ENCODE measurements at regions of chr16 and their contacts with region 1.

Region 1: DNA sequence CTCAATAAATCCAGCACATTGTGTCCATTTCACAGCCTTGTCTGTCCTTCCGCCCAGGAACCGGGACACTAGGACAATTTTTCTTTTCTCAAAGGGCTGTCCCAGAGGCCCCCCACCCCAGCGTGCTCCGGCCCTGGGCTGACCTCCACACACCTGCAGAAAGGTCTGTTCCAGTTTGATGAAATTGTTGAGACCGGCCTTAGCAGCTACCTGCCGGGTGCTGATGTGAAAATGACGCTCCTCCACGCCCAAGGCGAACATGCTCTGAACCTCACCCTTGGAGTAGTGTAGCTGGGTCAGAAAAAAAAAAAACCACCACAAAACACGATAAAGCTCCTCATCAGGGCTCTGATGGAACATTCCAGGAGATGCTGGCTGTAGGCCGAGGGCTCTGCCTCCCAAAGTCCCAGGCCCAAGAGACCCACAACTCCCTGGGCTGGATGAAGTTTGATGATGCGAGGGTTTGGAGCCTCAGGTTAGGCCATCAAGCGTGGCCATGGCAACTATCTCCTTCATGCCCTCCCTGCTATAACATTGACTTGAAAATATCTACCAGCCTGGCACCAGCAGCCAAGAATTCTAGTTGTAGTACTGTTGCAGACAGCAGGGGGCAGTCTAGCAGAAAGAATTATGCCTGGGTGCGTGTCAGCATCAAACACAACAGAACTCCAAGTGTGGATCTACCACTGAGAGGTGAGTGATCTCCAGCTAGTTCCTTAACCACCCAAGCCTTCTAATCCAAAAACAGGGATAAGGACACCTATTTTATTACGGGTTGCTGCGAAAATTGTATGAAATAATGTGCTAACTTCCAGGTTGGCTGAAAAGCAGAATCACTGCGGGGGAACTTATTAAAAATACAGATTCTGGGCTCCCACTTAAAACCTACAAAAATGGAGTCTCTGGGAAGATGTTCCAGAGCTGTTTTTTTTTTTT is 62.1 kb downstream of the RMI2 start:
- DNase-seq: peak; percentile 45
- ATAC-seq: peak; percentile 74
- H3K4me3 ChIP-seq: no peak overlapping the region
- H3K27ac ChIP-seq: no peak overlapping the region
- H3K4me1 ChIP-seq: no peaks in the 10 kb centered on the region
- H3K27me3 ChIP-seq: no peaks in the 10 kb centered on the region; a peak in 2 of 4 replicates
- CTCF ChIP-seq: peak; percentile 75 to 86 (median 83)
- EP300 ChIP-seq: no peak
- POLR2A ChIP-seq: no peak
- RAD21 ChIP-seq: peak; percentile 88

Region 2: DNA sequence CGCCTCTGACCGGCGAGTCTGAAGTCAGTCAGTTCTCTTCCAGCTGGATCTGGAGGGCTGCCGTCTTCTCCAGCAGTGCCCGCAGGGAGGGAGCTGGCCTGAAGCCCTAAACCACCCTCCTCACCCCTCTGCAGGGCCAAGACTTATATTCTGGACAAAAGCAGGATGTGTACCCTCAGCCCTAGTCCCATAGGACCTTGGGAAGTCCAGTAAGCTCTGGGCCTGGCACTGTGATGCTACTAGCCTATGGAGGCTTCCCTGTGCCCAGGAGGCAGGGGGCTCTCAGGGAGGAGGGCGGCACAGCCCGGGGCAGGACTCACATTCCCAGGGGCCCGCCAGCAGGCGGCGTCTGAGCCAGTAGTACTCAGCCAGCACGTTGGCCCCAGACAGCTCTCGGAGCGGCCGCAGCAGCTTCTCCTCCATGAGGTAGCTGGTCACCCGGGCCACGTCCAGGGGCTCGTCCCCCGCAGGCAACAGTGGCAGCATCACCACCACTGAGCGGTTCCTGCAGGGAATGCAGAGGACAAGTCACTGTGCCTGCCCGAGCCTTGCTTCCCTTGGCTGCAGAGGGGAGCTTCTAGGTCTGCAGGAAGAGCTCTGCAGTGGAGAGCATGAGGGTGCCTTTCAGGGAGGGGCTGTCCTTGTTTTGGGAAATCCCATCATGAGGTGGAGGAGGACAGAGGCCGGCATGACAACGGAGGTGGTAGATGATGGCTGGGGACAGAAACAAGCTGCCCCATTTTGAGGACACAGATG is 20.3 kb before region 1 on chr16:
- CTCF ChIA-PET with region 1: interaction called, 60 read pairs
- POLR2A ChIA-PET with region 1: no interaction called
- RAD21 ChIA-PET with region 1: interaction called, 5 read pairs
- SMC1A ChIA-PET with region 1: interaction called, 5 read pairs
- in situ Hi-C with region 1: no loop called
- intact Hi-C with region 1: no loop called
- DNase-seq: no peak
- ATAC-seq: peak; percentile 90
- H3K4me3 ChIP-seq: no peak overlapping the region
- H3K27ac ChIP-seq: no peak overlapping the region
- H3K4me1 ChIP-seq: peaks cover 11% of the 10 kb centered on the region
- H3K27me3 ChIP-seq: no peaks in the 10 kb centered on the region
- CTCF ChIP-seq: peak; percentile 47 to 77 (median 65)
- EP300 ChIP-seq: no peak
- POLR2A ChIP-seq: no peak
- RAD21 ChIP-seq: no peak

Region 3: GRCh38 chr16:11506741-11507305 is 99.5 kb after region 1 on chr16:
- CTCF ChIA-PET with region 1: interaction called, 8 read pairs
- POLR2A ChIA-PET with region 1: no interaction called
- RAD21 ChIA-PET with region 1: interaction called, 4 read pairs
- SMC1A ChIA-PET with region 1: interaction called, 8 read pairs
- in situ Hi-C with region 1: no loop called
- intact Hi-C with region 1: loop called (anchors 5 kb)
- DNase-seq: no peak
- ATAC-seq: peak; percentile 74
- H3K4me3 ChIP-seq: no peak overlapping the region
- H3K27ac ChIP-seq: no peak overlapping the region
- H3K4me1 ChIP-seq: peaks cover 6% of the 10 kb centered on the region; the same call in 1 of the 2 replicates
- H3K27me3 ChIP-seq: no peaks in the 10 kb centered on the region; a peak in 1 of 4 replicates
- CTCF ChIP-seq: peak; percentile 18 to 22 (median 20); a peak in 4 of 6 replicates
- EP300 ChIP-seq: no peak
- POLR2A ChIP-seq: no peak
- RAD21 ChIP-seq: no peak

Region 4: DNA sequence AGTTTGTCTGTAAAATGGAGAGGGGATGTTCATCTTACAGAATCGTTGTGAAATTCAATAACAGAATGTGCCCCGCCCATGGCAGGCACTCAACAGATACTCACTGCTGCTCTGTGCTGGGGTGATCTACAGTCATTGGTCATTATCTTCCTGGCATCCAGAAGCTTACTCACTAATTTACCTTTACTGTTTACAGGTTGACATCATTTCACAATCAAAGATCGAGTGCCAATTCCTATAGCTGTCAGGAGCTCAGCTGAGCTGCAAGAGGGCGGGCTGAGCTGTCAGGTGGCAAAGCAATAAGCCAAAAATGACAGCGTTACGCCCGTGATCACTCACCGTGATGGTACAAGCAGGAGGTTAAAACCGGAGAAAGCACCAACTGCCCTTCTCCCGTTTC is 128.2 kb after region 1 on chr16:
- CTCF ChIA-PET with region 1: interaction called, 80 read pairs
- POLR2A ChIA-PET with region 1: no interaction called
- RAD21 ChIA-PET with region 1: interaction called, 17 read pairs
- SMC1A ChIA-PET with region 1: interaction called, 52 read pairs
- in situ Hi-C with region 1: no loop called
- intact Hi-C with region 1: loop called (anchors 2 kb)
- DNase-seq: no peak
- ATAC-seq: no peak
- H3K4me3 ChIP-seq: no peak overlapping the region
- H3K27ac ChIP-seq: no peak overlapping the region
- H3K4me1 ChIP-seq: no peaks in the 10 kb centered on the region
- H3K27me3 ChIP-seq: no peaks in the 10 kb centered on the region; a peak in 1 of 4 replicates
- CTCF ChIP-seq: no peak
- EP300 ChIP-seq: no peak
- POLR2A ChIP-seq: no peak
- RAD21 ChIP-seq: no peak

Region 5: GRCh38 chr16:11632464-11632939 is 225.2 kb after region 1 on chr16:
- CTCF ChIA-PET with region 1: interaction called, 24 read pairs
- POLR2A ChIA-PET with region 1: no interaction called
- RAD21 ChIA-PET with region 1: interaction called, 4 read pairs
- SMC1A ChIA-PET with region 1: interaction called, 6 read pairs
- in situ Hi-C with region 1: no loop called
- intact Hi-C with region 1: no loop called
- DNase-seq: no peak
- ATAC-seq: no peak
- H3K4me3 ChIP-seq: no peak overlapping the region
- H3K27ac ChIP-seq: no peak overlapping the region
- H3K4me1 ChIP-seq: peaks cover 8% of the 10 kb centered on the region
- H3K27me3 ChIP-seq: no peaks in the 10 kb centered on the region; a peak in 1 of 4 replicates
- CTCF ChIP-seq: no peak
- EP300 ChIP-seq: no peak
- POLR2A ChIP-seq: no peak
- RAD21 ChIP-seq: no peak

Region 6: GRCh38 chr16:11715246-11715947 is 308.1 kb after region 1 on chr16:
- CTCF ChIA-PET with region 1: interaction called, 14 read pairs
- POLR2A ChIA-PET with region 1: no interaction called
- RAD21 ChIA-PET with region 1: interaction called, 4 read pairs
- SMC1A ChIA-PET with region 1: interaction called, 8 read pairs
- in situ Hi-C with region 1: no loop called
- intact Hi-C with region 1: loop called (anchors 5 kb)
- DNase-seq: no peak
- ATAC-seq: peak; percentile 80
- H3K4me3 ChIP-seq: no peak overlapping the region
- H3K27ac ChIP-seq: peak overlapping the region; percentile 48; the same call in 1 of the 2 replicates
- H3K4me1 ChIP-seq: peaks cover 16% of the 10 kb centered on the region
- H3K27me3 ChIP-seq: no peaks in the 10 kb centered on the region
- CTCF ChIP-seq: 0 out of 6 replicates have a peak, but pooled peaks of 1 of the 3 experiments have one; percentile 3
- EP300 ChIP-seq: no peak
- POLR2A ChIP-seq: no peak
- RAD21 ChIP-seq: peak; percentile 36